PC-9 (cell line): ENCODE measurements at regions of chr12 and their contacts with region 1.

Region 1: DNA sequence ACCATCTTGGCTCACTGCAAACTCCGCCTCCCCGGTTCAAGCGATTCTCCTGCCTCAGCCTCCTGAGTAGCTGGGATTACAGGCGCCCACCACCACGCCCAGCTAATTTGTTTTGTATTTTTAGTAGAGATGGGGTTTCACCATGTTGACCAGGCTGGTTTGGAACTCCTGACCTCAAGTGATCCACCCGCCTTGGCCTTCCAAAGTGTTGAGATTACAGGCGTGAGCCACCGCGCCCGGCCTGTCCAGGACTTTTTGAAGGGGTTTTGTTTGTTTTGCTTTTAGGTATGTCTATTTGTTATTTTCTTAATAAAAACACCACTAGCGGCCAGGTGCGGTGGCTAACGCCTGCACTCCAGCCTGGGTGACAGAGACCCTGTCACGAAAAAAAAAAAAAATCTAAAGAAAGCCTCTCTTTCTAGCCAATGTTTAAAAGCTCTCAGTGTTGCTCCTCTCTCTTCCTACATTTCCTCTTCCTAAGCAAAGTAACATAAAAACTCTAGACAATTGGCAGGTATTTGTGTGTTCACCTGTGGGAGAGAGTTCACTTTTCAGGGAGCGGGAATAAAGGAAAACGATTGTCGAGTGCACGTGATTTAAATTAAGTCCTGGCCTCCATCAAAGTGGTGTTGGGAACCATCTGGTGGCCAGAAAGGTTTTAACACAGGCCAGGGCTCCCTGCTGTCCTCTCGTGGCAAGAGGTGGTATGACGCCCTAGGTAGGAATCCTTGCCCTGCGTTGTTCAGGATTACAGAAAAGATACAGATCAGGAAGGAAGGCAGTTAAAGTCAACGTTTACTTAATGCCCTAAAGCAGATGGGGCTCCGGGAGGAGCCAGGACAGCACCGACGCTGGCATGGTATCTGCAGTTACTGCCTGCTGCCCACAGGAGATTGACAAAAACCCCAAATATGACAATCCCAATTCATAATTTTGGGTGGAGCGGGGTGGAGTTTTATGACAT is 36.2 kb upstream of the ATP23 start:
- DNase-seq: peak; percentile 76 to 88
- H3K4me3 ChIP-seq: no peak overlapping the region; the same call in 1 of the 2 replicates
- H3K27ac ChIP-seq: no peak overlapping the region
- H3K4me1 ChIP-seq: peaks cover 4% of the 10 kb centered on the region; the same call in 1 of the 2 replicates
- H3K27me3 ChIP-seq: 0 out of 2 replicates have a peak, but pooled peaks cover 2% of the 10 kb centered on the region
- CTCF ChIP-seq: peak; percentile 98

Region 2: DNA sequence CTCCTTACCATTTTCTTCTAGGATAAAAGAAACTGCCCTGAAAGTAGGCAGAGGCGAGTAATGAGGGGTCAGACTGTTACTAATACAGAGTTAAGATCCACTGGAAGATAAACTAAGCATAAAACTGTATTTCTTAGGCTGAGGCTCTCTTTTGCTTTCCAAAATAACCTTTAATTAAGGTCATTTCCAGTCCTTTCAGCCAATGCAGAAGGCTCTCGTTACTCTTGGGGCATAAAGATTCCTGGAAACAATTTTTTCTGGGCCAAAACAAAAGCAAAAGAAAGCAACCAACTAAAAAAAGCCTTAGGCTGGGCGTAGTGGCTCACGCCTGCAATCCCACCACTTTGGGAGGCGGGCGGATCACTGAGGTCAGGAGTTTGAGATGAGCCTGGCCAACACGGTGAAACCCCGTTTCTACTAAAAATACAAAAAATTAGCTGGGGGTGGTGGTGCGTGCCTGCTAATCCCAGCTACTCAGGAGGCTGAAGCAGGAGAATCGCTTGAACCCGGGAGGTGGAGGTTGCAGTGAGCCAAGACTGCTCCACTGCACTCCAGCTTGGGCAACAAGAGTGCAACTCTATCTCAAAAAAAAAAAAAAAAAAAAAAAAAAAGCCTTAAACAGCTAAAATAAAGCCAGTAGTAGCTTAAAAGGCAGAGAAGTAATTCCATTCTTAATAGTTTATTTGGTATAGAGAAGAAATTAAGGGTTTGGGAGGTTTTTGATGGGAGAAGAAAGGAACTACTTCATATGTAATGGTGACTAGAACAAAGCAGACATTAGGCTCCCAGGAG is 585.3 kb before region 1 on chr12:
- CTCF ChIA-PET with region 1: no interaction called
- POLR2A ChIA-PET with region 1: no interaction called
- intact Hi-C with region 1: no loop called
- DNase-seq: no peak
- H3K4me3 ChIP-seq: no peak overlapping the region
- H3K27ac ChIP-seq: no peak overlapping the region
- H3K4me1 ChIP-seq: 0 out of 2 replicates have a peak, but pooled peaks cover 6% of the 10 kb centered on the region
- H3K27me3 ChIP-seq: no peaks in the 10 kb centered on the region
- CTCF ChIP-seq: no peak

Region 3: GRCh38 chr12:57462251-57462911 is 442.7 kb before region 1 on chr12:
- CTCF ChIA-PET with region 1: no interaction called
- POLR2A ChIA-PET with region 1: no interaction called
- intact Hi-C with region 1: loop called (anchors 10 kb)
- DNase-seq: peak; percentile 74 to 88
- H3K4me3 ChIP-seq: peak overlapping the region; percentile 57
- H3K27ac ChIP-seq: no peak overlapping the region
- H3K4me1 ChIP-seq: peaks cover 23% of the 10 kb centered on the region
- H3K27me3 ChIP-seq: peaks cover 62% of the 10 kb centered on the region
- CTCF ChIP-seq: peak; percentile 92

Region 4: DNA sequence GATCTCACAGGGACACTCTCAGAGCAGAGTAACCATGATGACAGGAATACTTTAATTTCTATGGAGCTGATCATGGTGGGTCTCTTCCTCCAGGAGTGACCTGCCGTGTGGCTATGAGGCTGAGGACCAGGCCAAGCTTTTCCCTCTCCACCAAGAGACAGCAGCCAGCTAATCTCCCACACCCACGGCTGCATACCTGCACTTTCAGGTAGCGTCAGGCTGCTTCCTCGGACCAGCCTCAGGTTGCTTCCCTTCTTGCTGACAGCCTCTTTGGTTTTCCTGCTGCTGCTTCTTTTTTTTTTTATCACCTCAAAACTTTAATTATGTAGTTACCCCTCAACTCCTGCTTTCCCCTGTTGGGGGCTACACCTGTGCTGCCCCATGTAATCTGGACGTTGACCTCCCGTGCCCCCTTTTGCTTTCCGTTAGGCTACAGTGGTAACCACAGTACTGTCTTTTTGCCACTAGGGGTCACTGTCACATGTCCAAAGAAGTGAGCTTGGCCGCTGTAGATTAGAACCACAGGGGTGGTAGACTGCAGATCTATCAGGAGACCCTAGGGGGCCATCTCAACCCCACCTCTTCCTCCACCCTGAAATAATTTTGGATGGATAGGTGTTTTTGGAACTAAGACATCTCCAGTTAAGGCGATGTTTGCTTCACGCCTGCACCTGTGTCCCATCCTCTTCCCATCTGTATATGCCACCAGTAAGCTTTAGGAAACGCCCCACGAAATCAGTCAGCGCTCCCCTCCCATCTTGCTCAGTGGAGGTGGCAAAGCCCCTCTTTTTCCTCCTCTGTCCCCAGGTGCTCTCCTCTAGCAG is 321.9 kb before region 1 on chr12:
- CTCF ChIA-PET with region 1: no interaction called
- POLR2A ChIA-PET with region 1: no interaction called
- intact Hi-C with region 1: loop called (anchors 5 kb)
- DNase-seq: peak; percentile 65 to 67
- H3K4me3 ChIP-seq: no peak overlapping the region
- H3K27ac ChIP-seq: no peak overlapping the region
- H3K4me1 ChIP-seq: no peaks in the 10 kb centered on the region
- H3K27me3 ChIP-seq: peaks cover 34% of the 10 kb centered on the region
- CTCF ChIP-seq: peak; percentile 96

Region 5: GRCh38 chr12:57782608-57783465 is 122.3 kb before region 1 on chr12 and contains the start of gene TSFM:
- CTCF ChIA-PET with region 1: no interaction called
- POLR2A ChIA-PET with region 1: no interaction called
- intact Hi-C with region 1: loop called (anchors 1 kb)
- DNase-seq: peak; percentile 81 to 91
- H3K4me3 ChIP-seq: peak within 1 kb of the TSS; percentile 96
- H3K27ac ChIP-seq: no peak within 1 kb of the TSS
- H3K4me1 ChIP-seq: peaks cover 8% of the 10 kb centered on the region
- H3K27me3 ChIP-seq: no peaks in the 10 kb centered on the region
- CTCF ChIP-seq: peak; percentile 91
- total RNA-seq, gene TSFM: 38.1 and 44.8 TPM in 2 replicates

Region 6: DNA sequence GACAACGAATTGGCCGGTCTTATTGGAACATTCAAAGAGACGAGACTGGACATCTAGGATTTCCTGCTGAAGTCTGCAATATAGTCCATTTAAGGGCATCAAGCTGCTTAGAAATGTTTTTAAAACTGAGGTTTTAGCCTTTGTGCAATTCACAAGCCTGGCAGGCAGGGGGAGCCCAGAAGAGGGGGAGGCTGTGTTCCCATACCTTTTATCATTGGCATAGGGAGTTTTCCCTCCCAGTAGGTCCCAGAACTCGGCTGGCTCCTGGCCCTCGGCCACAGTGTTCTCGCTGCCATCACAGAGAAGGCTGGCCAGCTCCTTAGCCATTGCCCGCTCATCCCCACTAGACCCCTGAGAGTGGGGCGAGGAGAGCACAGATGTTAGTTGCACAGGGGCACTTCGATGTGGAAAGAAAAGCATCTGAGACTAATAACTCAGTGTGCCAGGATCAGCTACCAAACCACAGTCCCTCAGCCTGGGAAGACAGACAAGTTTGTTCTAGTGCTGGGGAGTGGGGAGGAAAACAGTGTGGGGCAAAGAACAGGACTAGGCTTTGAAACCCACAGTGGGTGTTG is 101.7 kb before region 1 on chr12:
- CTCF ChIA-PET with region 1: no interaction called
- POLR2A ChIA-PET with region 1: no interaction called
- intact Hi-C with region 1: loop called (anchors 1 kb)
- DNase-seq: peak in 1 of 2 experiments; percentile 24
- H3K4me3 ChIP-seq: no peak overlapping the region
- H3K27ac ChIP-seq: no peak overlapping the region
- H3K4me1 ChIP-seq: no peaks in the 10 kb centered on the region
- H3K27me3 ChIP-seq: no peaks in the 10 kb centered on the region
- CTCF ChIP-seq: peak; percentile 83

Region 7: DNA sequence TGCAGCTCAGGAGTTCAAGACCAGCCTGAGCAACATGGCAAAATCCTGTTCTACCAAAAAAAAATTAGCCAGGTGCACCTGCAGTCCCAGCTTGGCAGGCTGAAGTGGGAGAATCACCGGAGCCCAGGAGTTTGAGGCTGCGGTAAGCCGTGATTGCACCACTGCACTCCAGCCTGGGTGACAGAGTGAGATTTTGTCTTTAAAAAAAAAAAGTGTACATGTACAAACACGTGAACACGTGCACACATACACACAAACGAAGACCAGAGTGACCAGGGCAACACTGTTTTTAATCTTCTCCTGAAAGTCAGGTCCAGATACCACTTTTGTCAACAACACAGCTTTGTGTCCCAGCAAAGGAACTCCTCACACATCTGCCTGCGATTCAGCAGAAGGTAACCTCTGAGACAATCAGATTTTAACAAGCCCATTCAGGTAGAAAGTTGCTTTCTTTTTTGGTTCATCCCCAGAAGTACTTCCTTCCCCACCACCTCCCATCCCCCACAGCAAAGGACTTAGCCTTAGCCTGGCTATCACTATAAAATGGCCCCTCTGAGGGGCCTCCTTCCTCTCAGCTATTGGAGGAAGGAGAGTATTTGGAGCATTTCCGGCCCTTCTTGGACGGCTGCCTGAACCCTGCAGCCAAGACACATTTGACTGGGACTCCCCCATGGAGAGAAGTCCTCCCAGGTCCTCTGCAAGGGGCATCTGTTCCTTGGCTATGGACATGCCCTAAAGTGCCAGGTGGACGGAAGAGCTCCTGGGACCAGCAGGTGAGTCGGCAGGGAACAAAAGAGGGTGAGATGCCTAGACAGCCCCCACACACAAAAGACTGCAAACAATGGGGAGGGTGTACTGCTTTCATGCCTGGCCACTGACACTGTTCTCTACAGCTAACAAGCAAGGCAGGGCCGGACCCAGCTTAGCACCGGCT is 68.4 kb before region 1 on chr12:
- CTCF ChIA-PET with region 1: no interaction called
- POLR2A ChIA-PET with region 1: no interaction called
- intact Hi-C with region 1: loop called (anchors 1 kb)
- DNase-seq: no peak
- H3K4me3 ChIP-seq: no peak overlapping the region
- H3K27ac ChIP-seq: no peak overlapping the region
- H3K4me1 ChIP-seq: no peaks in the 10 kb centered on the region
- H3K27me3 ChIP-seq: no peaks in the 10 kb centered on the region
- CTCF ChIP-seq: no peak